Activated CD8-positive, alpha-beta T cell treated with anti-CD3 and anti-CD28 coated beads, Interleukin-2, amount 10 ng/mL, durations not matched to agents 7 days and 5 days (primary cell): ENCODE measurements at regions of chr3 and their contacts with region 1.

Region 1: DNA sequence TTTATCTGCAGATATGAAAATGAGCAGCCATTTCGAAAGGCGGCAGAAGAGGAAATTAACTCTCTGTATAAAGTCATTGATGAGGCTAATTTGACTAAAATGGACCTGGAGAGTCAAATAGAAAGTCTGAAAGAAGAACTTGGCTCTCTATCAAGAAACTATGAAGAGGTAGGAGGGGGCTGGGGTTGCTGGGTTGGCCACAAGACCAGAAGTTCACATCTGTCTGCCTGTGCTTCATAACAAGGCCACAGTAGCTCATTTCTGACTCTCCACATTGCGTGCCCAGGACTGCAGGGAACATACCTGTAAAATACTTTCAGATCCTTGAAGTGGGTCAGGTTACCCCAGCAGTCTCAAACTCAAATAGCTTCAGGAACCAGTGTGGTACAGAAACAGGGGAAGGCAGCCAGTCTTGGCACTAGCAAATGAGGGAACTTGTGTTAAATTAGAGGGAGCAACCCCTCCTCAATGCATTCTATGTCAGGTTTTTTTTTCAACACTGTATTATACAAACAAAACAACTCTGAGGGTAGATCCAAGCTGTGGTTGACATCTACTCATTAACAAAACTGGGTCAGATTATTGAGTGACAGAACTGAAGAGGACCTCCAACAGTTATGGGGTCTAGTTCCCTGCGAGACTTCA is 48.7 kb downstream of the BFSP2 start:
- DNase-seq: peak; percentile 44
- ATAC-seq: peak; percentile 75
- H3K4me3 Mint-ChIP-seq: no peak overlapping the region
- H3K27ac Mint-ChIP-seq: peak overlapping the region; percentile 75
- H3K4me1 Mint-ChIP-seq: peaks cover 21% of the 10 kb centered on the region
- H3K27me3 Mint-ChIP-seq: no peaks in the 10 kb centered on the region

Region 2: DNA sequence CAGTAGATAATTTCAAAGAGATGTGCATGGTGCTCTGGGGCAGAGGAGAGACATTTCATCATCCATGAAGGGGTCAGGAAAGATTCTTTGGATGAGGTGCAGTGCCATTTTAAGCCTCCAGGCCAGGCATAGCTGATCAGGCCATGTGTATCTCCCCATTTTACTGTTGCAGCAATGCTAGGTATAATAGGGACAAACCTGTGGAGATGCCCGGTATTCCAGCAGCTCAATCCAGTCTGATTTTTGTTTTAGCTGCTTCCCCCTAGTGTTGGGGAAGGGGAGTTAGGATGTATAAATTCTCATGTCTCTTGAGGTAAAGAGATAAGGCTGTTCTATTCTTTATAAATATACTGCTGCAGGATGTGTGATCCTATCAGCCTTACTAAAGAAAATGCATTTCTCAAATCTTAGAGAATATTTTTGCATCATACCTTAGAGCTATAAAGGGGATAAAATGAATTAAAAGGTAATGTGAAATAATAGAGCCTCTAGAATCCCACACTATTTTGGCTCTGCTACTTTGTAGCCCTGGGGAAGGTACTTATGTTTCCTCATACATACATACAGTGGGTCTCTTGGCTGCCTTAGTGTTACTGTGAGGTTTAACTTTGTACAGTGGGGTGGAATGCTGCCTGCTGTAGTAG is 130.1 kb after region 1 on chr3:
- CTCF ChIA-PET with region 1: interaction called, 13 read pairs
- POLR2A ChIA-PET with region 1: interaction called, 7 read pairs
- DNase-seq: no peak
- ATAC-seq: no peak
- H3K4me3 Mint-ChIP-seq: peak overlapping the region; percentile 68
- H3K27ac Mint-ChIP-seq: peak overlapping the region; percentile 74
- H3K4me1 Mint-ChIP-seq: peaks cover 47% of the 10 kb centered on the region
- H3K27me3 Mint-ChIP-seq: no peaks in the 10 kb centered on the region